WTC11 (cell line): ENCODE measurements at regions of chr5 and their contacts with region 1.

Region 1: GRCh38 chr5:1107167-1108022 is 4.5 kb downstream of the SLC12A7 start:
- DNase-seq: no peak
- ATAC-seq: peak; percentile 18
- H3K4me3 Mint-ChIP-seq: peak overlapping the region; percentile 2; the same call in 1 of the 2 replicates
- H3K27ac Mint-ChIP-seq: peak overlapping the region; percentile 93
- H3K4me1 Mint-ChIP-seq: peaks cover 46% of the 10 kb centered on the region
- H3K27me3 Mint-ChIP-seq: no peaks in the 10 kb centered on the region
- CTCF ChIP-seq: no peak

Region 2: GRCh38 chr5:1140171-1140817 is 32.9 kb after region 1 on chr5:
- CTCF ChIA-PET with region 1: interaction called, 10 read pairs
- POLR2A ChIA-PET with region 1: interaction called, 4 read pairs
- DNase-seq: peak; percentile 71
- ATAC-seq: peak; percentile 69
- H3K4me3 Mint-ChIP-seq: no peak overlapping the region
- H3K27ac Mint-ChIP-seq: no peak overlapping the region
- H3K4me1 Mint-ChIP-seq: peaks cover 10% of the 10 kb centered on the region
- H3K27me3 Mint-ChIP-seq: no peaks in the 10 kb centered on the region; the same call in 1 of the 2 replicates
- CTCF ChIP-seq: peak; percentile 46

Region 3: DNA sequence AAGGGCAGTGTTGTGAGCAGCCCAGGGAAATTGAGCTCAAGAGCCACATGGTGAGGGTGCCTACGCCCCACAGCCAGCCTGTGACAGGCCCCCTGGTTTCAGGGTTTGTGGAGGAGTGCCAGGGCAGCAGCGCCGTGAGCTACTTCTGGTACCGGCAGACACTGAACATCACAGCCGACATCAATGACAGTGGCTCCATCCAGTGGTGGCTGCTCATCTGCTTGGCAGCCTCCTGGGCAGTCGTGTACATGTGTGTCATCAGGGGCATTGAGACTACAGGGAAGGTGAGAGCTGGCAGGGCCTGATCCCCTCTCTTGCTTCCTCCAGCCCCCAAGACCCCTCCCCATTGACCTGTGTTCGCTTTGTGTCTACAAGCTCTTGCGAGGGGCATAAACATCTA is 128.0 kb after region 1 on chr5:
- CTCF ChIA-PET with region 1: no interaction called
- POLR2A ChIA-PET with region 1: no interaction called
- DNase-seq: no peak
- ATAC-seq: no peak; the same call in 1 of the 2 replicates
- H3K4me3 Mint-ChIP-seq: no peak overlapping the region
- H3K27ac Mint-ChIP-seq: no peak overlapping the region
- H3K4me1 Mint-ChIP-seq: no peaks in the 10 kb centered on the region
- H3K27me3 Mint-ChIP-seq: no peaks in the 10 kb centered on the region
- CTCF ChIP-seq: no peak